KBM-7 (cell line): ENCODE measurements at regions of chr5 and their contacts with region 1.

Region 1: DNA sequence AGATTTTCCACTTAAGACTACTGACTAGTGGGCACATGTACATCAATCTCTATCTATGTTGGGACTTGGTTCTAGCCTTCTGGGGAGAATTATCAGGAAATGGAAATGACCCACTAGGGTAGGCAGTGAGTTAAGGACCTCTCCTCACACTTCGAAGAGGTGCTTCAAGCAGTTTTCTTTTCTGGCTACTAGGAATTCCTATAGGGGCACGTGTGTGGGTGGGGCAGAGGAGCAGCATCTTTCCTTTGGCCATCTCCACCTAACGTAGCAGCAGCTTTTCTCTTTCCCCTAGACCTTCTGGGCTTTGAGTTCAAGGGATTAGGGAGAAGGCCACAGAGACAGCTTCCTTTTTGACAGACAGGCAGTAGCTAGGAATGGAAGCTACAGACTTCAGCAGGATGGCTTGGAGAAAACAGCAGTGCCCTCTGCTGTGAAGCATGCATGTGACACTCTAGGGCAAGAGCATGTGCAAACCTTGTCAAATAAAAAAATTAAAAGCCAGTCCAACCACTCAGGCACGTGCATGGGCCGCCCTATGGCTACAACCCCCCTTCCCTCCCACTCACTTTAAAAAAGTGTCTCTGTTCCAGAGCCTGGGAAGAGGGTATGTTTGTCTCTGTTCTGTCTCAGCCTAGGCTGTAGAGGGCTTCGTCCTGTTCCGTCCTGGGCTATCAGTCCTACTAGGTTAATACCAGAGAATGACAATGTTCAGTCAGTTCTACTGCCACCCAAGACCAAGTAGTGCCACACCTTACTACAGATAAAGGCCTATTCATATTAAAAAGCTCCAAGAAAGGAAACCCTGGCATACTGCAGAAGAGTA is 8.7 kb upstream of the GFRA3 start:
- DNase-seq: peak; percentile 80

Region 2: DNA sequence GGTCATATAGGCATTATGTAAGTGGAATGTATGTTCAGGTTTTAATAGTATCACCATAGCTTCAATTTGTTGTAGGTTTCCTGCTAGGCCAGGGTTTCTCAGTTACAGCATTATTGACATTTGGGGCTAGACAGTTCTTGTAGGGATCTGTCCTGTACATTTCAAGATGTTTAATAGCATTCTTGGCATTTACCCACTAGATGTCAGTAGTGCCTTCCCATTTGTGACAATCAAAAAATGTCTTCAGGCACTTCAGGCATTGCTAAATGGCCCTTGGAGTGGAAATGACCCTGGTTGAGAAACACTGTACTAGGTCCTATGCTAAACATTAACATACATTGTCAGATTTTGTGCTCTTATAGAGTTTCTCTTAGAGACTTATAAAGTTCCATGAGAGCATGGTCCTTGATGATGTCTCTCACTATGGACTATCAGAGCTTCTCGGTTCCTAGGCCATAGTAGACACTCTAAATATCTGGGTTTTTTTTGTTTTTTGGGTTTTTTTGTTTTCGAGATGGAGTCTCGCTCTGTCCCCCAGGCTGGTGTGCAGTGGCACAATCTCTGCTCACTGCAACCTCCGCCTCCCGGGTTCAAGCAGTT is 102.8 kb before region 1 on chr5:
- in situ Hi-C with region 1: loop called (anchors 10 kb)
- DNase-seq: peak; percentile 86